Left cardiac atrium (tissue), 4 donors: ENCODE measurements at regions of chr17 and their contacts with region 1.

Region 1: DNA sequence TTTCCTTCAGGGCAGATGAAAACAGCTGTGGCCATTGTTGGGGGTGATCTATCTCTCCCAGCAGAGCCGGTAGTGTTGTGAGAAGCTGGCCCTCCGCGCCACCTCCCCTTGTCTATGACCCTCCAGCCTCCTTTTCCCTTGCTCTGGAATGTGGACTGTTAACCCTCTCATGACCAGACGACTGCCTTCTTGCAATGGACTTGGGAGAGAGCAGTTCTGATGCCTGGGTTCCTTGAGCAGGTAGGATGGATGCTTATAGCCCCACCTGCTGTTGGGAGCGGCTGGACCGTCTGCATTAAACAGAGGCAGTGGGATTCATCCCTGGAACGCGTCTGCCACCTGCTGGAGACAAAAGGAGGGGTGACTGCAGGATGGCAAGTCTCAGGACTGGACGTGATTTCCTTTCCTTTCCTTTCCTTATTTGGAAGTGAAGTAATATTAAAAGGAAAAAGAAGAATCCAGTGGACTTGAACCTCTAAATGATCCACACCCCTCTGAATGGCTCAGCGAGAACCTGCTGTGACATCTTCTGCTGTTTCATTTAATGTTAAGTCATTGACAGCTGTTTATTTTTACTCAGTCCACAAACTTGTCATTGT is 1.8 kb upstream of the SOST start:
- DNase-seq: peak; percentile 93
- ATAC-seq: peak; percentile 91 to 94

Region 2: GRCh38 chr17:43576563-43577229 is 183.7 kb before region 1 on chr17:
- intact Hi-C with region 1: loop called in 1 of 2 experiments (anchors 10 kb)
- DNase-seq: peak; percentile 68
- ATAC-seq: peak; percentile 81 to 83

Region 3: DNA sequence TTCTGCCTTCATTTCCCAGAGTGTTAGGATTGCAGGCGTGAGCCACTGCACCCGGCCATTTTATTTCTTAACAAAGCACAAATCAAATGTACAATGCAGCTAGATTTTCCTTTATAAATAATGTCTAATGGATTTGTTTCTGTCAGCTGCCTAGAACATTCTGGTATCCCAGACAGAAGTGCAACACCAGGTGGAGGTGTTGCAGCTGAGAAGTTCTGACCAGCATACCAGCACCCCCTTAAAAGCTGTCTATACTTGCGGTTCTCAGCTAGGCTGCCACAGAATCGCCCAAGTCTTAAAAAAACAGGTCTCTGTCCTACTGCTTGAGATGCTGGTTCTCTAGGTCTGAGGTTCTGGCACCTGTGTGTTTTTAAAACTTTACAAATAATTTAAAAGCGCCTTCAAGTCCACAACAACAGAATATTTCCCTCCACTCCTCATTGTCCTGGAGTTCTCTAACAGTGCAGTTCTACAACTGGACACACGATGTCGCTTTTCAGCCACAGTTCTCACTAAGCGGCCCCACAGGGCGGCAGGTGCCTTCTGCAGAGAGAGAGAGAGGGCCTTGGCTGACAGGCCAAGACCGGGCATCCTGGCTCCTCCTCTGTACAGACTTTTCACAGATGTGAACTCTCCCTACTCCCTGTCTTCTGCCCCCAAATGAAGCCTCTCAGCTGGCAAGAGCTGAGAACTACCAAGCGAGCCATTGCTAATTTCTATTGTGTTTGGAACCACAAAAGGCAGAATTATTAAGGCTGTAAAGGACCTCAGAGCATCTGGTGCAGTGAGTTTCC is 66.1 kb before region 1 on chr17:
- intact Hi-C with region 1: loop called (anchors 1 to 2 kb)
- DNase-seq: peak; percentile 73
- ATAC-seq: peak; percentile 81 to 83